CD4-positive, alpha-beta T cell (primary cell): ENCODE measurements at regions of chr12 and their contacts with region 1.

Region 1: DNA sequence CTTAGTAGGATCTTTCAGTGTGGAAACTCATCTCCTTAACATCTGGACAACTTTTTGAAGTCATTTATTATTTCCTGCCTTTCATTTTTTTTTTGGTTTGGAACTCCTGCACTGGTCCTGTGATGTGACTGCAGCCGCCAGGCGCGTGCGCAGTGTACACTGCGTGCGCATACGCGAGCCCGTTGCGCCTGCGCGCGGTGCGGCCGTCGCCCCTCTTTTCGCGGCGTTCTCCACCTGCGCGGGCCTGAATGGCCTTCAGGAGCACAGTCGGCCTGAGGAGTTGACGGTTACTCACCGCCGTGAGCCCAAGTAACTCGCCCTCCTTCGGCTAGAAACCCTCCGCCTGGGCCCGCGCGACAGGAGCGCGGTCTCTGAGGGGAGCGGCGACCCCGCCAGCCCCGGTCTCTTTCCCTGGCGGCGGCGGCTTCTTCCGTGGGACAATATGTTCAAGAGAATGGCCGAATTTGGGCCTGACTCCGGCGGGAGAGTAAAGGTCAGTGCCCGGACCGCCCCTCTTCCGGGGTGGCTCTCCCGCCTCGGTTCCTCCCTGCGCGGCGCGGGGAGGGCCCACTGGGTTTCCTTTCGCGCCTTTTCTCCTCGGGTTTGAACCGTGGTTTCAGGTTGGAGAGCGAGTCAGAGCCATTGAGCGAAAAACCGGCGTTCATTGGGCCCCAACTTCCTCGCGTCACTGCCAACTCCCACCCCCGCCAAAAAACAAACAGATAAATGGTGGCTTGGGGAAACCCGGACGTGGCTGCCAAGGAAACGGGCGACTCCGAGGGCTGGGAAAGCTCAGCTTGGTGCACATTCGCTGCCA is at the start of gene YEATS4:
- DNase-seq: peak; percentile 70 to 95 (median 81)
- ATAC-seq: peak; percentile 81
- H3K4me3 ChIP-seq: peak within 1 kb of the TSS; percentile 100
- H3K4me3 Mint-ChIP-seq: peak within 1 kb of the TSS; percentile 97
- H3K27ac ChIP-seq: peak within 1 kb of the TSS; percentile 96 to 99
- H3K27ac Mint-ChIP-seq: peak within 1 kb of the TSS; percentile 95
- H3K4me1 ChIP-seq: peaks cover 21% of the 10 kb centered on the region
- H3K4me1 Mint-ChIP-seq: peaks cover 27% of the 10 kb centered on the region
- H3K27me3 ChIP-seq: no peaks in the 10 kb centered on the region
- H3K27me3 Mint-ChIP-seq: peaks cover under 1% of the 10 kb centered on the region
- CTCF ChIP-seq: no peak
- total RNA-seq, gene YEATS4: 26.2 TPM

Region 2: DNA sequence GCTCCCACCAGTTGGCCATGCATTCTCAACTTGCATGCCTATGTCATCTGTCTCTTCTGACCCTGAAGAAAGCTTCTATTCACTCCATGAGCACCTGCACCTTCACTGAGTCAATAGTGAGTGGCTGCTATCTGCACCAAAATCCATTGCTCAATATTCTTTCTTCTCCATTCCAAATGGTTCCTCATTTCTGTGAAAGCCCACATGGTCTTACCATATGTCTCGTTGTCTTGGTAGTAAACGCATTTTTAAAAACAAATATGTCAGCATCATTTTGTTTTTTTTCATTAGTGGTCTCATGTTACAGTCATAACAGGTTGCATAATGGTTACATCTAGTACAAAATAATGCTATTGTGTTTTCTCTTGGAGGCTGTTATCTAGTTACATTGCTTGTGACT is 319.8 kb before region 1 on chr12:
- CTCF ChIA-PET with region 1: no interaction called
- POLR2A ChIA-PET with region 1: no interaction called
- intact Hi-C with region 1: no loop called
- DNase-seq: peak in 3 of 14 experiments; percentile 18 to 51 (median 31)
- ATAC-seq: no peak
- H3K4me3 ChIP-seq: no peak overlapping the region
- H3K4me3 Mint-ChIP-seq: no peak overlapping the region
- H3K27ac ChIP-seq: no peak overlapping the region
- H3K27ac Mint-ChIP-seq: no peak overlapping the region
- H3K4me1 ChIP-seq: no peaks in the 10 kb centered on the region
- H3K4me1 Mint-ChIP-seq: no peaks in the 10 kb centered on the region
- H3K27me3 ChIP-seq: no peaks in the 10 kb centered on the region
- H3K27me3 Mint-ChIP-seq: no peaks in the 10 kb centered on the region
- CTCF ChIP-seq: no peak

Region 3: GRCh38 chr12:69173368-69173767 is 186.4 kb before region 1 on chr12:
- CTCF ChIA-PET with region 1: no interaction called
- POLR2A ChIA-PET with region 1: no interaction called
- intact Hi-C with region 1: no loop called
- DNase-seq: no peak
- ATAC-seq: no peak
- H3K4me3 ChIP-seq: no peak overlapping the region
- H3K4me3 Mint-ChIP-seq: no peak overlapping the region
- H3K27ac ChIP-seq: no peak overlapping the region
- H3K27ac Mint-ChIP-seq: no peak overlapping the region
- H3K4me1 ChIP-seq: no peaks in the 10 kb centered on the region
- H3K4me1 Mint-ChIP-seq: no peaks in the 10 kb centered on the region
- H3K27me3 ChIP-seq: no peaks in the 10 kb centered on the region
- H3K27me3 Mint-ChIP-seq: no peaks in the 10 kb centered on the region
- CTCF ChIP-seq: no peak

Region 4: GRCh38 chr12:69290545-69291277 is 69.0 kb before region 1 on chr12:
- CTCF ChIA-PET with region 1: interaction called, 5 read pairs
- POLR2A ChIA-PET with region 1: no interaction called
- intact Hi-C with region 1: loop called (anchors 1 to 2 kb)
- DNase-seq: peak; percentile 70 to 91 (median 78)
- ATAC-seq: peak; percentile 100
- H3K4me3 ChIP-seq: no peak overlapping the region
- H3K4me3 Mint-ChIP-seq: no peak overlapping the region
- H3K27ac ChIP-seq: no peak overlapping the region
- H3K27ac Mint-ChIP-seq: no peak overlapping the region
- H3K4me1 ChIP-seq: peaks cover 7% of the 10 kb centered on the region
- H3K4me1 Mint-ChIP-seq: peaks cover 6% of the 10 kb centered on the region
- H3K27me3 ChIP-seq: no peaks in the 10 kb centered on the region
- H3K27me3 Mint-ChIP-seq: peaks cover 35% of the 10 kb centered on the region
- CTCF ChIP-seq: peak; percentile 93

Region 5: GRCh38 chr12:69570545-69571399 is 211.0 kb after region 1 on chr12:
- CTCF ChIA-PET with region 1: interaction called, 55 read pairs
- POLR2A ChIA-PET with region 1: interaction called, 5 read pairs
- intact Hi-C with region 1: loop called (anchors 1 kb)
- DNase-seq: peak; percentile 15 to 87 (median 36)
- ATAC-seq: peak; percentile 88
- H3K4me3 ChIP-seq: no peak overlapping the region
- H3K4me3 Mint-ChIP-seq: no peak overlapping the region
- H3K27ac ChIP-seq: no peak overlapping the region
- H3K27ac Mint-ChIP-seq: no peak overlapping the region
- H3K4me1 ChIP-seq: no peaks in the 10 kb centered on the region
- H3K4me1 Mint-ChIP-seq: no peaks in the 10 kb centered on the region
- H3K27me3 ChIP-seq: no peaks in the 10 kb centered on the region
- H3K27me3 Mint-ChIP-seq: no peaks in the 10 kb centered on the region
- CTCF ChIP-seq: peak; percentile 92

Region 6: DNA sequence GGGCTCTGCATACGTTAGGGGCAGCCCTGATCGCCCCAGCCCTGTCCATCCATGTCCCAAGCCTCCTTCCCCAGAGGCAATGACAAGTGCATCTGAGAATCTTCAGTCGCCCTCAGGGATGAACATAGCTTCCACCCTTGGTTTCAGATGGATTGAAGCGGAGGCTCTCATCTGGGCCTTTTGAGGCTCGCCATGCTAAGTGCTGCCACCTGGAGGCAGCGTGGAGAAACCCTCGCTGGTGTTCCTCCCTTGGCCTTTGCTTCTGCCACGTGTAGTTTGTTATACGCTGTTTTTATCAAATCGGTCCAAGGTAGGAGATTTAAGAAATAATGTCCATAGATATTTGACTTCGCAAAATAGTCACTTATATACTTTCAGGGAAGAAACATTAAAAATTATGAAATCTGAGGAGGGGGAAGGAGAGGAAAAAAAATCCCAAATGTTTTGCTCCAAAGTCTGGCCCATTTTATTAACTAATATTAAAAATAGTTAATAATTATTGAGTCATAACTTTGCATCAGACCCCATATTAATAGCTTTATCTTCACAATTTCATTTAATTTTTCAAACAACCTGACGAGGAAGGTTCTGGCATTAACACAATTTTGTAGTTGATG is 279.8 kb after region 1 on chr12:
- CTCF ChIA-PET with region 1: interaction called, 5 read pairs
- POLR2A ChIA-PET with region 1: no interaction called
- intact Hi-C with region 1: loop called (anchors 1 to 2 kb)
- DNase-seq: peak; percentile 22 to 78 (median 44)
- ATAC-seq: peak; percentile 79
- H3K4me3 ChIP-seq: no peak overlapping the region
- H3K4me3 Mint-ChIP-seq: no peak overlapping the region
- H3K27ac ChIP-seq: no peak overlapping the region
- H3K27ac Mint-ChIP-seq: no peak overlapping the region
- H3K4me1 ChIP-seq: no peaks in the 10 kb centered on the region
- H3K4me1 Mint-ChIP-seq: no peaks in the 10 kb centered on the region
- H3K27me3 ChIP-seq: no peaks in the 10 kb centered on the region
- H3K27me3 Mint-ChIP-seq: no peaks in the 10 kb centered on the region
- CTCF ChIP-seq: peak; percentile 72

Region 7: GRCh38 chr12:70576346-70577282 is 1216.9 kb after region 1 on chr12:
- CTCF ChIA-PET with region 1: interaction called, 4 read pairs
- POLR2A ChIA-PET with region 1: no interaction called
- intact Hi-C with region 1: loop called in 1 of 2 experiments (anchors 10 kb)
- DNase-seq: peak in 4 of 14 experiments; percentile 2 to 64 (median 62)
- ATAC-seq: no peak
- H3K4me3 ChIP-seq: no peak overlapping the region
- H3K4me3 Mint-ChIP-seq: no peak overlapping the region
- H3K27ac ChIP-seq: no peak overlapping the region
- H3K27ac Mint-ChIP-seq: no peak overlapping the region
- H3K4me1 ChIP-seq: no peaks in the 10 kb centered on the region
- H3K4me1 Mint-ChIP-seq: no peaks in the 10 kb centered on the region
- H3K27me3 ChIP-seq: no peaks in the 10 kb centered on the region
- H3K27me3 Mint-ChIP-seq: peaks cover 5% of the 10 kb centered on the region
- CTCF ChIP-seq: peak; percentile 75